Transverse colon (tissue), 4 donors: ENCODE measurements at regions of chr3 and their contacts with region 1.

Region 1: DNA sequence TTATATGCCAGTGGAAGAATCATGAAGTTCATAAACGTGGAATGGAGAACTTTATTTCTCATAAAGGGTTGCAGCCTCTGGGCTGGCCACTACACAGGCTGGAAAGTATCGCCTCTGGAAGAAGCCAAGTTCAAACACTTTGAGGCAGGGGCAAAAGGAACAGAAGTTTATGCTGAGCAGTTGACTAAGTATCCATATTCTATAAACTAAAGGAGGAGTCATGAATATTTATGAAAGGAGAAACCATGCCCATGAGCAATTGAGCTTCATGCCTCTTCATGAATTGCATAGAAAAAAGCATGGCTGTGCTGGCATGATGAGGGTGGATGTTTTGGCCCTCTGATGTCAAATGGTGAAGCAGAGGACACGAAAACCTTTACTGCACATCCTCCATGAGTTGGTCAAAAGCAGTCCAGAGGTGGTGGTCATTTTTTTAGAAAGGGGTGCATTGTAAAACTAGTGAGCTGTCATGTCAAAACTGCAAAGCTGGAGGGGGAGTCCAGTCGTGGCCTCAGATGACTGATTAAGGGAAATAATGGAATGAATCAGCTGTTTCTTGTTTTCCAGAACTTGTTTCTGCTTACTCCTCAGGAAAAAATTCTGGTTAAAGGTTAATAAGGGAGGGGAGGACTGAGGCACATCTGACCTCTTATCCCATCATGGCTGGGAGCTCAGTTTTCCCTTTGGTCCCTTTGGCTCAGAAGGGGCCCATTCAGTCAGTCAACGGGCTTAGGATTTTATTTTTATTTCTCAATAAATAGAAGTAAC is 276.7 kb downstream of the CHL1 start:
- DNase-seq: no peak
- H3K4me3 ChIP-seq: no peak overlapping the region
- H3K27ac ChIP-seq: no peak overlapping the region
- H3K4me1 ChIP-seq: no peaks in the 10 kb centered on the region
- H3K27me3 ChIP-seq: no peaks in the 10 kb centered on the region
- CTCF ChIP-seq: no peak
- EP300 ChIP-seq: no peak
- POLR2A ChIP-seq: no peak

Region 2: GRCh38 chr3:1828519-1828918 is 1355.3 kb after region 1 on chr3:
- in situ Hi-C with region 1: no loop called
- intact Hi-C with region 1: loop called (anchors 5 kb)
- DNase-seq: no peak
- H3K4me3 ChIP-seq: no peak overlapping the region
- H3K27ac ChIP-seq: no peak overlapping the region
- H3K4me1 ChIP-seq: no peaks in the 10 kb centered on the region
- H3K27me3 ChIP-seq: no peaks in the 10 kb centered on the region
- CTCF ChIP-seq: no peak
- EP300 ChIP-seq: no peak
- POLR2A ChIP-seq: no peak